Activated naive CD4-positive, alpha-beta T cell treated with anti-CD3 and anti-CD28 coated beads for 36 hours (primary cell): ENCODE measurements at regions of chr11 and their contacts with region 1.

Region 1: DNA sequence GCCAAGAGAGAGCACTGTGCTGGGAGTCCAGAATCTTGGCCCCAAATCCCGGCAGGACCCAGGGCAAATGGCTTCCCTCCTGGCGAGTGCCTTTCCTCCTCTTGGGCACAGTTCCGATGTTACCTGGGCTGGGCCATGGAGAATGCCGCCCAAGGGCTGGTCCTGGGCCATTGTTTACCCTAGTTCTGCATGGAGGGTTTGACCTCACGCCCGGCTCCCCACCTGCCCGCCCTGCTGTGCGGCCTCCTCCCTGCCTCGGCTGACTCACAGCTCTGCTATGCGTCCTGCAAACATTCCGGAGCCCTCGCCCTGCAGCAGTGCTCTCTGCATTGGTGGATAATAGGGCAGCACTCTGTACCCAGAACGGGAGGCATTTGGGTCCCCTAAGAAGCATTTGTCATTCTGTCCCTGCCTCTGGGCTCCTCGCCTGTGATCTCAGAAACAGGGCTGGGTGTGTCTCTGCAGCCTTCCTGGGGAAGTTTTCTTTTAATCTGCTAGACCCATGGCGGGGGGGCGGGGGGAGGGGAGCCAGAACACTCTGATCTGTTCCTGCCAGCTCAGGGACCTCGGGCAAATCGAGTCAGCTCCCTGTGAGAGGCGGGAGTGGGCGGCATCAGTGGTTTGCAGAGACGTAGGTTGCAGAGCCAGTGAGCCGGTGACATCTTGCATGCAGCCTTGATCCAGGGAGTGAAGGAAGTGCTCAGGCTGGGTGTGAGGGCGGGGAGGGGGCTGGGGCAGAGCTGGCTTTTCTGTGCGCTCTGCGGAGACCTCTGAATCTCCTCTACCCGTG is 32.9 kb upstream of the SMIM38 start:
- DNase-seq: peak; percentile 88
- H3K4me3 Mint-ChIP-seq: peak overlapping the region; percentile 32
- H3K27ac Mint-ChIP-seq: peak overlapping the region; percentile 18
- H3K4me1 Mint-ChIP-seq: peaks cover 44% of the 10 kb centered on the region
- H3K27me3 Mint-ChIP-seq: no peaks in the 10 kb centered on the region

Region 2: DNA sequence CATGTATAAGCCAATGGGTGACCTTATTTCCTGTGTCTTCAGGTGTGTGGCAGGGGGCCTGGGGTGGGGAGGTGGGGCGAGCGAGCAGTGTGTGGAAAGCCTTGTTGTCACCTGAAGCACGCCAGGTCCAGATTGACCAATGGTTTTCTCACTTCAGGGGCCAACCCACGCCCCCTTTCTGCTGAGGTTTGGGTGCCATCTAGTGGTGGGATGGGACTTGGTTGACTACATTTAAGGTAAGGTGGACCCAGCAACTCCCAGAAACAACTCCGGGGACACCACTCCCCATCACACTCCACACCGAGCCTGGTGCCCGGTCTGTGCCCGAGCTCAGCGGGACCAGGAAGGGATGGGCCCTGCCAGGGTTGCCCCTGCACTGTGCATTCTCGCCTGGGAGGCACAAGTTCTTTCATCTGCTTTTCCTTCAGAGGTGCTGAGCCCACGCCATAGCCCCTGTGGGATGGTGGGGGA is 34.1 kb before region 1 on chr11:
- CTCF ChIA-PET with region 1: no interaction called
- intact Hi-C with region 1: no loop called
- DNase-seq: peak; percentile 77
- H3K4me3 Mint-ChIP-seq: no peak overlapping the region
- H3K27ac Mint-ChIP-seq: no peak overlapping the region
- H3K4me1 Mint-ChIP-seq: no peaks in the 10 kb centered on the region
- H3K27me3 Mint-ChIP-seq: no peaks in the 10 kb centered on the region

Region 3: DNA sequence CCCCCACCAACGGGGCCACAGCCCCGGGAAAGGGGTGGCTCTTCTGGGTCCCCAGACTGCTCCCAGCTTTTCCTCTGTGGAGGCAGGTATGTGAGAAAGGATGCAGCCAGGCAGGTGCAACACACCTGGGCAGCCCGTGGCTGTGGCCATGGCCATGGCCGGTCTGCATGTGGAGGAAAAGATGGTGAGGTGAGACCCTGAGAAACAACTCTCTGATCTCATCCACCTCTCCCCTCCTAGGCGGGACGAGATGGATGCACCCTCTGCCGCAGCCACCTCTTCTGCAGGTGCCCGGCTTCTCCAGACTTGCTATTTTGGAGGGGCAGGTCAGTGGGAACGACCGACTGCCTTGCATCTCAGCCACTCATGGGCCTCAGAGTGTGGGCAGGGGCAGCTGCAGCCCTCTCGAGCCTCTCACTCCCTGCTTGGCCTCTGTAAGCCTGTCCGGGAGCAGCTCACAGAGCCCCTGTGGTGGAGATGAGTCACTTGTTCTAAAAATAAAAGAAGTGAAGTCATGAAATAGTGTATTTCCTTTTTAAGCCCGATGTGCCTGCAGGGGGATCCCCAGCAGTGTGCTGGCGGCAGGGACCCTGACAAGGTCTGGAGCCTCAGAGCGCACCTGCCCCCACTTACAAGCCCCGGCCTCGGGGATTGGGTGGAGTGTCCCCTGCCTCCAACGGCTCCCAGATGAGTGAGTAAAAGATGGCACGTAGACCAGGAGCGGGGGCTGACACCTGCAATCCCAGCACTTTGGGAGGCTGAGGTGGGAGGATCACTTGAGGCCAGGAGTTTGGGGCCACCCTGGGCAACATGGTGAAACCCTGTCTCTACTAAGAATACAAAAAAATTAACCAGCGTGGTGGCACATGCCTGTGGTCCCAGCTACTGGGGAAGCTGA is 43.6 kb after region 1 on chr11:
- CTCF ChIA-PET with region 1: no interaction called
- intact Hi-C with region 1: loop called (anchors 1 kb)
- DNase-seq: peak; percentile 79
- H3K4me3 Mint-ChIP-seq: peak overlapping the region; percentile 27
- H3K27ac Mint-ChIP-seq: peak overlapping the region; percentile 27
- H3K4me1 Mint-ChIP-seq: peaks cover 18% of the 10 kb centered on the region
- H3K27me3 Mint-ChIP-seq: peaks cover 2% of the 10 kb centered on the region

Region 4: DNA sequence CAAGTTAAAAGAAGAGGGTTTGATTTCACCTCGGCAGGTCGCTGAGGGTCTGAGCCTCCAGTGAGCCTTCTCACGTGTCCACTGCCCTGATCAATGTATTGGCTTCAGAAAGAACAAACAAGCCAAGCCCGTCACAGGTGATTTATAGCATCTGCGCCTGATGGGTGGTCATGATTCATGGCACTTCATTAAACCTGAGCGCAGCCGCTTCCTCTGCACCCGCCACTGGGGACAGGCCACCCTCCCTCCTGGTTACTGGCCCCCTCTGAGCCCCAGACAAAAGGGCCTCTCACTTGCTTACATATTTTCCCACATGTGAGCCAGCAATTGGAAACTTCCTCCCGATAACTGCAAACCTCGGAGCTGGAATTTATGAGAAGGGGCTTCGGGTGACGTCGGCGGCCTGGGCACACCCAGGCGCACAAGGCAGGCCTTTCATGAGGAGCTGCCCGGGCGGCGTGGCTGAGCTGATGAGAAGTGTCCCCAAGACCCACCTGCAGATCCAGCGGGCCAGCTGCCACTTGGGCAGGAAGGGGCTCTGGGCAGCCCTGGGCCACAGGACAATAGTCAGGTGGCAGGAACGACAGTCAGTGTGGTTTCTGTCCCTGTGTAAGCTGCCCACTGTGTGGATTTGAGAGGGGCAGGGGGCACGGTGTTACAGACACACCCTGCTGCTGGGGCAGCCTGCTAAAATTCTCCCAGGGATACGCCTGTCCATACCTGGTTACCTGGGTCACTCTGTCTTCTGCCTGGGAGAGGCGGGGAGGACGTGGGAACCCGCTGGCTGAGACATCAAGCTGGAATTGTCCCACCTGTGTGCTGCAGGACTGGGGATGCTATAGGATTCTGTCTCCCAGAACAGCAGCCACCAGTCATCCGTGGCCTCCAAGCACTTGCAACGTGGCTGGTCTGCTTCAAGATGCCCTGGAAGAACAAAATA is 294.6 kb after region 1 on chr11:
- CTCF ChIA-PET with region 1: no interaction called
- intact Hi-C with region 1: loop called (anchors 10 kb)
- DNase-seq: no peak
- H3K4me3 Mint-ChIP-seq: no peak overlapping the region
- H3K27ac Mint-ChIP-seq: no peak overlapping the region
- H3K4me1 Mint-ChIP-seq: peaks cover 2% of the 10 kb centered on the region
- H3K27me3 Mint-ChIP-seq: no peaks in the 10 kb centered on the region

Region 5: GRCh38 chr11:69443138-69443967 is 320.5 kb after region 1 on chr11:
- CTCF ChIA-PET with region 1: no interaction called
- intact Hi-C with region 1: loop called (anchors 10 kb)
- DNase-seq: peak; percentile 76
- H3K4me3 Mint-ChIP-seq: peak overlapping the region; percentile 53
- H3K27ac Mint-ChIP-seq: no peak overlapping the region
- H3K4me1 Mint-ChIP-seq: peaks cover 11% of the 10 kb centered on the region
- H3K27me3 Mint-ChIP-seq: peaks cover 7% of the 10 kb centered on the region